ENCODE measurements at regions of chr6 and their contacts with region 1.

Region 1: DNA sequence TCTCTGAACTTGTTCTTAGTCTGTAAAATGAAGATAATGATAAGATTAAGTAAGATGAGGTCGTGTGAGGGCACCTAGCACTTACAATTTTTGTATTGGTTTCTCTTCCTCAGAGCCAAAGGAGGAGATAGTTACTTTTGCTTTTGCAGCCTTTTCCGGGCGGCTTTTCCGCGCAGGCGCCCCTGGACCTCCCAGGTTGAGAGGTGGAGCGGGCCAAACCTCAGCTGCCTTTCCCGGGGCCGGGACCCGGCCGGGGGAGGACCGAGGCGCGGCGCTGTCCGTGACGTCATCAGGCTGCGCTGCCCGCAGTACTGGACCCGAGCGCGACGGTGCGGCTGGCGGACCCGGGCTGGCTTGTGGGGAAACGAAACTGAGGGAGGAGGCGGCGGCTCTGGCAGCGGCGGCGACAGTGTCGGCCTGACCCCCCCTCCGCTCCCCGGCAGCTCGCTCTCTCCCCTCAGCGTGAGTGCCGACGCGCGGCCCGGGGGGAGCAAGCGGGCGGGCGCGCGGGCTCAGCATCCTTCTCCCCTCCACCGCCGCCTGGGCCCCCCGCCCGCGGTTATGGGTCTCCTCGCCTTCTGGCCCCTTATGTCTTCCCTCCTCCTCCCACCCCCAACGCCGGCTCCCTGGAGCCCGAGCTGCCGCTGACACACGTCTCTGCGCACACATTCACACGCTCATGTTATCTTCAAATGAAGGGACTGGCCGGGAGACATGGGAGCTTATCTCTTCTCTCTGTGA is at the start of gene CMTR1:
- DNase-seq: peak; percentile 85 to 95 (median 92)
- H3K4me3 ChIP-seq: peak within 1 kb of the TSS; percentile 60 to 98 (median 92)
- H3K27ac ChIP-seq: peak within 1 kb of the TSS; percentile 37 to 97 (median 90)
- H3K27me3 ChIP-seq: peaks cover 0 to 2% (median 0%) of the 10 kb centered on the region in 45 donors
- CTCF ChIP-seq: peak in 37 of 56 donors; percentile 11 to 57 (median 38)
- total RNA-seq, gene CMTR1: 39.1 to 69.9 (median 54.8) TPM

Region 2: DNA sequence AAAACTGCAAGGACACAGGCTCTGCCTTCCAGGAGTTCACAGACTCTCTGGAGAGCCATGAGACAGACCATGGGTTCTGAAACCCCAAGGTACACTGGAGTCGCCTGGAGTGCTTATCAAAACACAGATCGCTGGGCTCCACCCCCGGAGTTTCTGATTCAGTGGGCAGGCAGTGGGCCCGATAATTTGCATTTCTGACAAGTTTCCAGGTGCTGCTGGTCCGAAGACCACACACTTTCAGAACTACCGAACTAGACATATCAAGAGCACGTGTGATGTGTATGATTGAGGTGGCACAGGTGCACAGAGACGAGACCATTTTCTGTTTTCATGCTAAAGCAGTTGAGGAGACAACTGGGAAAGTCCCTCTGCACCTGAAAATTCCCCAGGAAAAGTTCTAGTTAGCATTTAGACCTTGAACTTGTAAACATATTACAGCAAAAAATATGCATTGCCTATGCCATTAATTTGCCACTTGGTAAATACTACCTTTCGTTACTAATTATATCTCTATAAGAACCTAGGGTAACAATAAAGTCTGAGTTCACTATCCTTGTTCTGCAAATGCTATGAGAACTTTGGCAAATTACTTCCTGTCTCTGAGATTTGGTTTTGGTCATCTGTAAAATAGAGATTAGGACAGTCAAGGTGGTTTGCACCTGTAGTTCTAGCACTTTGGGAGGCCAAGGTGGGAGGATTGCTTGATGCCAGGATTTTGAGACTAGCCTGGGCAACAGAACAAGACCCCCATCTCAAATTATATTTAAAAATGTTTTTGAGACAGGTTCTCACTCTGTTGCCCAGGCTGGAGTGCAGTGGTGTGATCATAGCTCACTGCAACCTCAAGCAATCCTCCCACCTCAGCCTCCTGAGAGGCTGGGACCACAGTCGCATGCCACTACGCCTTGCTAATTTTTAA is 277.4 kb before region 1 on chr6:
- intact Hi-C with region 1: no loop called
- DNase-seq: no peak
- H3K4me3 ChIP-seq: no peak overlapping the region
- H3K27ac ChIP-seq: no peak overlapping the region
- H3K27me3 ChIP-seq: no peaks in the 10 kb centered on the region
- CTCF ChIP-seq: no peak

Region 3: DNA sequence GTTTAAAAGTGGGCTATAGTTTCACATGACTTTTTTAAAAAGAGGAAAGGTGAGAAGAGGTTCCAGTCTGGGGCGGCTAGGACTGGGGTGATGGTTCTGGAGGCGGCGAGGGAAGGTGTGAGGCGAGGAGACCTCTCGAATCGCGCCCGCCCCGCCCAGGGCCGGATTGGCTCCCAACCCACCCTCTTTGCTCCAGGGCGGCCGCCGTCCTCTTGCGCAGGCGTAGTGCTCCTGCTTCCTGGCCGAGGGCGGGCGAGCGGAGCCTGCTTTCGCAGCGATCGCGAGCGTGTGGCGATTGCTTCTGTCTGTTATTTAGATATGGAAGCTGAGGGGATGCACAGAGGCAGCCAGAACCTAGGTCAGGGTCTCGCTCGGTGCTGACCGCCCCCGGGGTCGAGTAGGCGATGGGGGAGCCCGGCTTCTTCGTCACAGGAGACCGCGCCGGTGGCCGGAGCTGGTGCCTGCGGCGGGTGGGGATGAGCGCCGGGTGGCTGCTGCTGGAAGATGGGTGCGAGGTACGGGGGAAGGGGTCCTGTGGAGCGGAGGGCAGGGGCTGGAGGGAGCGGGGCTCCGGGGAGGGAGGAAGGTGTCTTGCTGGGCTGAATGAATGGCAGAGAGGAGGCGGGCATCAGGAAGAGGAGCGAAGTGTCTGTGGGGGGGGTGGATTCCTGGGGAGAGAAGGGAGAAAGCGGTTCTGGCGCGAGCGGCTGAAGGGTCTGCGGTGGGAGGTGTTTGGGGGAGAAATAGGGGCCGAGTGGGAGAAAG is 79.1 kb before region 1 on chr6 and contains the start of gene RNF8:
- intact Hi-C with region 1: loop called in 1 of 2 experiments (anchors 2 kb)
- DNase-seq: peak; percentile 80 to 93 (median 88)
- H3K4me3 ChIP-seq: peak within 1 kb of the TSS; percentile 59 to 94 (median 82)
- H3K27ac ChIP-seq: peak within 1 kb of the TSS in 45 of 59 donors; percentile 1 to 89 (median 64)
- H3K27me3 ChIP-seq: no peaks in the 10 kb centered on the region
- CTCF ChIP-seq: peak in 14 of 56 donors; percentile 3 to 38 (median 24)
- total RNA-seq, gene RNF8: 16.3 to 45.3 (median 30.9) TPM

Region 4: GRCh38 chr6:37365762-37366161 is 67.3 kb before region 1 on chr6:
- intact Hi-C with region 1: loop called in 1 of 2 experiments (anchors 5 kb)
- DNase-seq: no peak
- H3K4me3 ChIP-seq: no peak overlapping the region
- H3K27ac ChIP-seq: peak overlapping the region in 5 of 59 donors; percentile 4 to 41 (median 29)
- H3K27me3 ChIP-seq: no peaks in the 10 kb centered on the region
- CTCF ChIP-seq: peak in 52 of 56 donors; percentile 18 to 67 (median 44)

Region 5: GRCh38 chr6:37499433-37500293 is 66.6 kb after region 1 on chr6 and contains the start of gene CCDC167:
- intact Hi-C with region 1: loop called (anchors 1 to 5 kb)
- DNase-seq: peak; percentile 89 to 96 (median 94)
- H3K4me3 ChIP-seq: peak within 1 kb of the TSS; percentile 50 to 90 (median 78)
- H3K27ac ChIP-seq: peak within 1 kb of the TSS in 45 of 59 donors; percentile 4 to 87 (median 61)
- H3K27me3 ChIP-seq: no peaks in the 10 kb centered on the region
- CTCF ChIP-seq: peak in 20 of 56 donors; percentile 6 to 58 (median 22)
- total RNA-seq, gene CCDC167: 4.7 to 37.8 (median 16.6) TPM